Heart right ventricle (tissue), 16 donors: ENCODE measurements at regions of chr12 and their contacts with region 1.

Region 1: DNA sequence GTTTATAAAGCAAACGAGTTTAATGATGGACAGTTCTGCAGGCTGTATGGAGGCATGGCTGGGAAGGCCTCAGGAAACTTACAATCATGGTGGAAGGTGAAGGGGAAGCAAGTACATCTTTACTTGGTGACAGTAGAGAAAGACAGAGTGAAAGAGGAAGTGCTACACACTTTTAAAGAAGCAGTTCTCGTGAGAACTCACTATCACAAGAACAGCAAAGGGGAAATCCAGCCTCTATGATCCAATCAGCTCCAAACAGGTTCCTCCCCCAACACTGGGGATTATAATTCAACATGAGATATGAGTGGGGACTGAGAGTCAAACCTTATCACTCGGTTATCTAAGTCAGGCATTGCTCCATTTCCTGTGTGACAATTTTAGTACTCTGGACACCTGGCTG is 189.9 kb upstream of the CNTN1 start:
- DNase-seq: no peak
- ATAC-seq: no peak
- H3K4me3 ChIP-seq: no peak overlapping the region
- H3K27ac ChIP-seq: no peak overlapping the region
- H3K4me1 ChIP-seq: no peaks in the 10 kb centered on the region
- H3K27me3 ChIP-seq: no peaks in the 10 kb centered on the region
- CTCF ChIP-seq: no peak

Region 2: DNA sequence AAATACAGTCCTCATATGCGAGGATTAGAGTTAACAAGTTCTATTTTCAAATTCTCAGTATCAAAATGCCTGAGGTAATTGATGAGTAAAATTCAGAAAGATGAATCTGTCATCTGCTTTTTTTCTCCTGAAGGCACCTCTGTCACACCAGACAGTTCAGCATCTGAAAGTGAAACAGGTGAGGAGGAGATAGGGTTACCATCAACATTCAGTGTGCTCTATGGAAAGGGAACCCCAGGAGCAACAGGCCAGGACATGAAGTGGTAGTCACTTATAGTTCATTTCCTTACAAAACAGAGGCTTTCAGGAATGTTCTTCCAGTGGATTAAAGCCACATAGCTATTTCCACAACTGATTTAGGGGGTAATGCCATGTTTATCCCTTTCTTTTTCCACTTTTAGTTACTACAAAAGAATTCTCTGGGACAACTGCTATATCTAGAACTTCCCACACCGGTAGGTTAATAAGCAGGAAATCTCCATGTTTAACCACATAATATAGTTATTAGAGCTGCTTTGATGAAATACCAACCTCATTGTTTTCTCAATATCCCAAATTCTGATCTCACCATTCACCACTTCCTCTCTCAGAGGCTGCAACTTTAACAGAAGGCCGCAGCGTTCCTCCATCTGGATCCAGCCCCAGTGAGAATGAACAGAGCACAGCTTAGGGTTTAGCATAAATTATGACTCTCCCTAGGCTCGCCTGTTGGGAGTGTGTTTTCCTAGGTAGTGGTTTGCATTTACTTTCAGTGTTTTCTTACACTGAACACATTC is 12.9 kb after region 1 on chr12:
- intact Hi-C with region 1: loop called in 1 of 10 experiments (anchors 1 kb)
- DNase-seq: no peak
- ATAC-seq: no peak
- H3K4me3 ChIP-seq: no peak overlapping the region
- H3K27ac ChIP-seq: no peak overlapping the region
- H3K4me1 ChIP-seq: no peaks in the 10 kb centered on the region
- H3K27me3 ChIP-seq: no peaks in the 10 kb centered on the region
- CTCF ChIP-seq: no peak